A549 (cell line): ENCODE measurements at regions of chr12 and their contacts with region 1.

Region 1: GRCh38 chr12:98490501-98491453 is 24.6 kb upstream of the TMPO start:
- DNase-seq: peak; percentile 67 to 94
- ATAC-seq: peak; percentile 96 to 98
- H3K4me3 ChIP-seq: peak overlapping the region; percentile 33; the same call in 2 of the 3 replicates
- H3K27ac ChIP-seq: peak overlapping the region; percentile 86 to 90
- H3K4me1 ChIP-seq: peaks cover 16% of the 10 kb centered on the region
- CTCF ChIP-seq: peak; percentile 83
- EP300 ChIP-seq: no peak
- POLR2A ChIP-seq: no peak
- RAD21 ChIP-seq: peak; percentile 75 to 76

Region 2: DNA sequence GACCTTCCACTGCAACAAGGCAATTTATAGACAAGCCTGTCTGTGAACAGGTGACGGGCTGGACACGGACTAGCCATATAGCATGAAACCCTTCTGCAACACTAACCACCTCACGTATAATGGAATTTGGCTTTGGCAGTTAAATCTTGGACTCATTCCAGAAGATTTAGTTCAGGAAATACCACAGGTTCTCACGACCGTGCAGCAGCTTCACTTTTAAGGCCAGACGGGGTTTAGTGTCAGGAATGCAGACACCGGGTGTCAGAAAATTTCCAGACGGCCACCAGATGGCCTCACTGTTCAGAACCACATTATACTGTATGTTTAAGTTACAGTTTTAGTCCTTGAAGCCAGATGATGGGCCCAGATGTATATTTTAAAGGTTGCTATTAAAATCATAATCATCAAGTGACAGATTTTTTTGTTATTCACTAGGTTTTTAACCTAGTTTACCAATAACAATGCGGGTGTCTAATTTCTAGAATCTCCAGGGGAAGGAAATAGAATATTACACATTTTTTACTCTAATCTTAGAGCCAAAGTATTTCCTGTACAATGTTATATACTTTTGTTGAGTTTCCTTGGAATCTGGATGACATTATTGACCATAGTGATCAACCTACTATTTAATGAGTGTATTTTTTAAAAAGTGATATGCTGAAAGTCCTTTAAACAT is 65.9 kb before region 1 on chr12:
- CTCF ChIA-PET with region 1: interaction called, 11 read pairs
- POLR2A ChIA-PET with region 1: interaction called, 3 read pairs
- DNase-seq: peak; percentile 74 to 76
- ATAC-seq: peak; percentile 90 to 91
- H3K4me3 ChIP-seq: no peak overlapping the region
- H3K27ac ChIP-seq: peak overlapping the region in 1 of 2 experiments; percentile 50; a peak in 1 of 6 replicates
- H3K4me1 ChIP-seq: peaks cover 12% of the 10 kb centered on the region
- CTCF ChIP-seq: peak; percentile 86
- EP300 ChIP-seq: no peak
- POLR2A ChIP-seq: no peak
- RAD21 ChIP-seq: peak; percentile 72 to 82

Region 3: GRCh38 chr12:98439981-98440581 is 50.7 kb before region 1 on chr12:
- CTCF ChIA-PET with region 1: interaction called, 16 read pairs
- POLR2A ChIA-PET with region 1: no interaction called
- DNase-seq: peak in 1 of 2 experiments; percentile 64
- ATAC-seq: peak; percentile 79 to 90
- H3K4me3 ChIP-seq: no peak overlapping the region
- H3K27ac ChIP-seq: peak overlapping the region; percentile 56 to 76
- H3K4me1 ChIP-seq: peaks cover 14% of the 10 kb centered on the region
- CTCF ChIP-seq: no peak
- EP300 ChIP-seq: peak in 1 of 2 experiments; percentile 44; a peak in 2 of 5 replicates
- POLR2A ChIP-seq: no peak
- RAD21 ChIP-seq: no peak

Region 4: GRCh38 chr12:98475565-98475908 is 15.2 kb before region 1 on chr12:
- CTCF ChIA-PET with region 1: interaction called, 16 read pairs
- POLR2A ChIA-PET with region 1: interaction called, 12 read pairs
- DNase-seq: no peak
- ATAC-seq: peak; percentile 71 to 73; a peak in 5 of 6 replicates
- H3K4me3 ChIP-seq: no peak overlapping the region
- H3K27ac ChIP-seq: peak overlapping the region; percentile 71 to 95
- H3K4me1 ChIP-seq: peaks cover 21% of the 10 kb centered on the region
- CTCF ChIP-seq: no peak
- EP300 ChIP-seq: no peak
- POLR2A ChIP-seq: no peak
- RAD21 ChIP-seq: no peak; a peak in 1 of 5 replicates

Region 5: GRCh38 chr12:98503592-98504367 is 13.0 kb after region 1 on chr12:
- CTCF ChIA-PET with region 1: interaction called, 30 read pairs
- POLR2A ChIA-PET with region 1: interaction called, 8 read pairs
- DNase-seq: peak; percentile 73 to 98
- ATAC-seq: peak; percentile 71 to 75
- H3K4me3 ChIP-seq: peak overlapping the region; percentile 55
- H3K27ac ChIP-seq: peak overlapping the region; percentile 94
- H3K4me1 ChIP-seq: peaks cover 23% of the 10 kb centered on the region
- CTCF ChIP-seq: no peak
- EP300 ChIP-seq: no peak
- POLR2A ChIP-seq: peak; percentile 44; the same call in 1 of the 2 replicates
- RAD21 ChIP-seq: no peak; a peak in 1 of 5 replicates

Region 6: DNA sequence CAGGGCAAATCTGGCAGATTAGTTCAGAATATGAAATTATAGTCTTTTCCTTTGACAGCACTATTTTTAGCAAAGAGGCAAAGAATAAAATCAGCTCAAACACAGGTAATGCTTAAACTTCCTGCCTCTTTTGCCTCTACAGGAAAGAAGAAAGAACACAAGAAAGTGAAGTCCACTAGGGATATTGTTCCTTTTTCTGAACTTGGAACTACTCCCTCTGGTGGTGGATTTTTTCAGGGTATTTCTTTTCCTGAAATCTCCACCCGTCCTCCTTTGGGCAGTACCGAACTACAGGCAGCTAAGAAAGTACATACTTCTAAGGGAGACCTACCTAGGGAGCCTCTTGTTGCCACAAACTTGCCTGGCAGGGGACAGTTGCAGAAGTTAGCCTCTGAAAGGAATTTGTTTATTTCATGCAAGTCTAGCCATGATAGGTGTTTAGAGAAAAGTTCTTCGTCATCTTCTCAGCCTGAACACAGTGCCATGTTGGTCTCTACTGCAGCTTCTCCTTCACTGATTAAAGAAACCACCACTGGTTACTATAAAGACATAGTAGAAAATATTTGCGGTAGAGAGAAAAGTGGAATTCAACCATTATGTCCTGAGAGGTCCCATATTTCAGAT is 42.0 kb after region 1 on chr12:
- CTCF ChIA-PET with region 1: interaction called, 18 read pairs
- POLR2A ChIA-PET with region 1: no interaction called
- DNase-seq: peak; percentile 49 to 79
- ATAC-seq: peak; percentile 91 to 93
- H3K4me3 ChIP-seq: no peak overlapping the region
- H3K27ac ChIP-seq: peak overlapping the region; percentile 1 to 64; a peak in 3 of 6 replicates
- H3K4me1 ChIP-seq: peaks cover 19% of the 10 kb centered on the region; the same call in 2 of the 3 replicates
- CTCF ChIP-seq: peak; percentile 83
- EP300 ChIP-seq: no peak
- POLR2A ChIP-seq: no peak
- RAD21 ChIP-seq: peak; percentile 37 to 45; a peak in 4 of 5 replicates

Region 7: GRCh38 chr12:98550803-98551202 is 60.0 kb after region 1 on chr12:
- CTCF ChIA-PET with region 1: no interaction called
- POLR2A ChIA-PET with region 1: no interaction called
- DNase-seq: no peak
- ATAC-seq: no peak
- H3K4me3 ChIP-seq: no peak overlapping the region
- H3K27ac ChIP-seq: no peak overlapping the region
- H3K4me1 ChIP-seq: no peaks in the 10 kb centered on the region
- CTCF ChIP-seq: no peak
- EP300 ChIP-seq: no peak
- POLR2A ChIP-seq: no peak
- RAD21 ChIP-seq: no peak